ENCODE measurements at regions of chr7 and their contacts with region 1.

Region 1: GRCh38 chr7:123208793-123209192 is 9.0 kb upstream of the SLC13A1 start:
- DNase-seq: no peak
- CTCF ChIP-seq: peak; percentile 14

Region 2: DNA sequence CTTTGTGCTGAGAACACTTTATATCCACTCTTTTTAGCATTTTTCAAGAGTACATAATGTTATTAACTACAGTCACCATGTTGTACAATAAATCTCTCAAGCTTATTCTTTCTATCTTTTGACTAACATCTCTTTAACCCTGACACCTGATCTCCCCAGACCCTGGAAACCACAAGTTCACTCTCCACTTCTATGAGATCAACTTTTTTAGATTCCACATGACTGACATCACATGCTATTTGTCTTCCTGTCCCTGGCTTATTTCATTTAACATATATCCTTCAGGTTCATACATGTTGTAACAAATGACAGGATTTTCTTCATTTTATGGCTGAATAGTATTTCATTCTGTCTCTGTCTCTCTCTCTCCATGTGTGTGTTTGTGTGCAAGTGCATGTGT is 24.5 kb before region 1 on chr7:
- CTCF ChIA-PET with region 1: no interaction called
- POLR2A ChIA-PET with region 1: no interaction called
- DNase-seq: no peak
- CTCF ChIP-seq: no peak

Region 3: GRCh38 chr7:123220396-123220795 is 11.6 kb after region 1 on chr7:
- CTCF ChIA-PET with region 1: interaction called, 26 read pairs
- POLR2A ChIA-PET with region 1: no interaction called
- DNase-seq: no peak
- CTCF ChIP-seq: no peak